Activated T-helper 1 cell treated with anti-CD3 and anti-CD28 coated beads, Interleukin-12 subunit alpha, Interleukin-12 subunit beta, Interleukin-2, Interleukin-4 antibody, amounts not matched to agents 30 ng/mL and 10 ng/mL and 1 ng/mL, durations not matched to agents 14 hours and 24 hours and 36 hours (primary cell): ENCODE measurements at regions of chr11 and their contacts with region 1.

Region 1: GRCh38 chr11:83071567-83072349 is at the start of gene RAB30:
- DNase-seq: peak; percentile 93
- H3K4me3 Mint-ChIP-seq: no peak within 1 kb of the TSS
- H3K27ac Mint-ChIP-seq: no peak within 1 kb of the TSS
- H3K4me1 Mint-ChIP-seq: peaks cover 26% of the 10 kb centered on the region
- H3K27me3 Mint-ChIP-seq: no peaks in the 10 kb centered on the region
- total RNA-seq, gene RAB30: 15.2 and 16.0 TPM in 2 replicates

Region 2: DNA sequence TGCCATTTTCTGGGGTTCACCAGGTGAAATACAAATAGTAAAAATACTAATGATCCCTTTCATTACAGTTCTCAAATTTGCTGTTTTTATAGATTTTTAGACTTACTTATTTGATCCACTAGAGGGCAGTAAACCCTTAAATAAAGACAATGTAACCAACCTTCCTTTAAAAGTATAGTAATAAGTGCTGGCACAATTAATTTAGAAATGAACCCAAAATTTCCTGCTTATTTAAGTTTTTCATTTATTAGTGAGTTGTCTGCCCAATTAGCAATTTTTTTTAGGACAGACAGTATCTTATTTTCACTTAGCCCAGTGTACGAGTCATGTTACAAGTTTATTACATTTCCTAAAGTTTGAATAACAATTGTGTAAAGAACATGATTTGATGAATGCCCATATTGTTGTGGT is 165.5 kb before region 1 on chr11:
- intact Hi-C with region 1: loop called (anchors 1 kb)
- DNase-seq: no peak
- H3K4me3 Mint-ChIP-seq: no peak overlapping the region
- H3K27ac Mint-ChIP-seq: no peak overlapping the region
- H3K4me1 Mint-ChIP-seq: peaks cover 56% of the 10 kb centered on the region
- H3K27me3 Mint-ChIP-seq: no peaks in the 10 kb centered on the region

Region 3: DNA sequence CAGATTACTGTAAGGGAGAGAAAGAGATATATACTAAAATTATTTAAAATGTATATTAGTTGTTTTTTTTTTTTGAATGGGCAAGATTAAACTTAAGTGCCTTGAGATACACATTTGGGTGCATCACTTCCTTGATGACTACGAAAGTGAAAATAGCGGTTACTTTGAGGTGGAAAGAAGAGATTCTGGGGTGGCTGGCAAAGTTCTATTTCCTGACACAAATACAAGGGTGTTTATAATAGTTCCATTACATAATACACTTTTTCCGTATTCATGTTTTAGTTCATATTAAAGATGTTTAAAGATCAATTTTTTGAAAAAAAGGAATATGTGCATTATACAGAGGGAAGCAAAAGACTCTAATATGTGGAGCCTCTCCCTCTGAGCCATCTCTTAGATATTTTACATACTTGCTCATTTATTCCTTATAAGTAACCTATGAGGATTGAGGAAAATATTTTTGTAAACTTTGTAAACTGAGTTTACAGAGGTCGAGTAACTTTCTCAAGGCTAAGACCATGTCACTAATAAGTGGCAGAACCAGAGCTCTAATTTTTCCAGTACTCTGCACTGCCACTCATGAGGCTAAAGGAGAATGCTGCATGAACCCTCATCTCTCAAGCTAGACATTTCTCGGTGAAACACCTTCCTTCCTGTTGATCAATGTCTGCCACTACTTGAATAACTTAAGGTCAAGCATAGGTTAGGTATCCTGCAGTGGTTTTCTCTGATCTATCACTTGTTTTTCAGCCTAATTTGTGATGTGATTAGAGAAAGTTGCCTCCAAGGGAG is 111.6 kb before region 1 on chr11:
- intact Hi-C with region 1: loop called (anchors 2 kb)
- DNase-seq: peak; percentile 42
- H3K4me3 Mint-ChIP-seq: peak overlapping the region; percentile 68
- H3K27ac Mint-ChIP-seq: peak overlapping the region; percentile 91
- H3K4me1 Mint-ChIP-seq: peaks cover 59% of the 10 kb centered on the region
- H3K27me3 Mint-ChIP-seq: no peaks in the 10 kb centered on the region

Region 4: DNA sequence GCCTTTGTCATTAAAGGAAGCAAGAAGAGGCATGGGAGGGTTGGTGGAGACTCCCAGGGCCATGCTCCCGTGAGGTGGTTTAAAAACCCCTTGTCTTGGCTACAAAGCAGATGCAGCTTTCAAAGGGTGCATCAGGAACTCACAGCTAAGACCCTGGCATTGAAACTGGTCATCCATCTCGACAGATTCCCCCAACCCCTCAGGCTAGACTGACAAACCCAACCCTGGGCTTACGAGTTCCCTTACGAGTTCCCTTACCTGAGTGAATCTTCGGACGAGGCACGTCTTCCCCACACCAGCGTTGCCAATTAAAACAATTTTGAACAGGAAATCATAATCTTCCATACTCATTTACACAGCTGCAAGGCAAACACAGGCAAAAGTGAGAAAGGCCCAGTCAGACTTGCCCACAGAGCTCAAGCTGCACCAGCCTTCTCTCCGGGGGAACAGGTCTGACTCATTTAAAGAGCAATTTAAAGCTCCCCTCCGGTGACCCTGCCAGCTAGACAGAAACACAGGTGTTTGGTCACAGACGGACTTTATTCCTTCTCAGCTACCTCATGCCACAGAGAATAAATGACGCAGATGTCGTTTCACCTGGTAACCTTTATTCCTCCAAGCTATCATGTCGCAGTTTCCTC is 74.7 kb before region 1 on chr11:
- intact Hi-C with region 1: loop called (anchors 1 kb)
- DNase-seq: no peak
- H3K4me3 Mint-ChIP-seq: no peak overlapping the region
- H3K27ac Mint-ChIP-seq: peak overlapping the region; percentile 37
- H3K4me1 Mint-ChIP-seq: peaks cover 67% of the 10 kb centered on the region
- H3K27me3 Mint-ChIP-seq: no peaks in the 10 kb centered on the region

Region 5: DNA sequence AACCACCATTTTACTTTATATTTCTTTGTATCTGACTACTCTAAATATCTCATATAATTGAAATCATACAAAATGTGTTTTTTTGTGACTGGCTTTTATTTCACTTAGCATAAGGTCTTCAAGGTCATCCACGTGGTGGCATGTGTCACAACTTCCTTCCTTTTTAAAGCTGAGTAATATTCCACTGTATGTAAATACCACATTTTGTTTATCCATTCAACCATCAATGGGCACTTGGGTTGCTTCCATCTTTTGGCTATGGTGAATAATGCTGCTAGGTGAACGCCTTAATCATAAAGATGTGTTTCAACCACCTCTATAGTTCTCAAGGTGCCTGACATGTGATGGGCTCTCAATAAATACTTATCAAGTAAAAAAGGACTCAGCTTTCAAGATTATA is 15.6 kb before region 1 on chr11:
- intact Hi-C with region 1: loop called (anchors 2 kb)
- DNase-seq: no peak
- H3K4me3 Mint-ChIP-seq: no peak overlapping the region
- H3K27ac Mint-ChIP-seq: peak overlapping the region; percentile 21
- H3K4me1 Mint-ChIP-seq: peaks cover 56% of the 10 kb centered on the region
- H3K27me3 Mint-ChIP-seq: no peaks in the 10 kb centered on the region

Region 6: GRCh38 chr11:83156150-83156995 is 84.6 kb after region 1 on chr11:
- intact Hi-C with region 1: loop called (anchors 1 kb)
- DNase-seq: peak; percentile 95
- H3K4me3 Mint-ChIP-seq: peak overlapping the region; percentile 97
- H3K27ac Mint-ChIP-seq: peak overlapping the region; percentile 96
- H3K4me1 Mint-ChIP-seq: peaks cover 36% of the 10 kb centered on the region
- H3K27me3 Mint-ChIP-seq: no peaks in the 10 kb centered on the region